Mammary epithelial cell (primary cell): ENCODE measurements at regions of chr2 and their contacts with region 1.

Region 1: GRCh38 chr2:25207078-25207545 is 38.7 kb upstream of the POMC start:
- DNase-seq: no peak
- H3K4me3 ChIP-seq: no peak overlapping the region
- H3K27ac ChIP-seq: no peak overlapping the region
- H3K4me1 ChIP-seq: no peaks in the 10 kb centered on the region
- H3K27me3 ChIP-seq: peaks cover 2% of the 10 kb centered on the region
- CTCF ChIP-seq: no peak

Region 2: DNA sequence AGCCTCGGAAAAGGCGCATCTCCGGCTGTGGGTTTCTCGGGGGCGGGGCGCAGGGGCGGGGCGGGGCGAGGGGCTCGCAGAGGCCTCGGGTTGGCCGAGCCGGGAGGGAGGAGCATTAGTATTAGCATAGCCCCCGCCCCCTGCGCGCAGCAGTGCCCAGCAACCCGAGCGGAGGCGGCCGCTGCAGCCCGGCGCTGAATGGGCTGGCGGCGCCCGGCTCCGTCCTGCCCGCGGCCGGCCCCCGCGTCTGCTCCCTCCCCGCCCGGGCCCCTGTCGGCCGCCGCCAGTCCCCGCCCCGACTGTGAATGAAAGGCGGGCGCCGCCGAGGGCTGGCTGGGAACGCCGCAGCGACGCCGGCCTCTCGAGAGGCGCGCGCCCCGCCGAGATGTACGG is 165.2 kb before region 1 on chr2 and contains the start of gene EFR3B:
- CTCF ChIA-PET with region 1: no interaction called
- dilution Hi-C with region 1: no loop called
- in situ Hi-C with region 1: no loop called
- intact Hi-C with region 1: no loop called
- DNase-seq: peak; percentile 89
- H3K4me3 ChIP-seq: peak within 1 kb of the TSS; percentile 37 to 59 (median 53)
- H3K27ac ChIP-seq: no peak within 1 kb of the TSS
- H3K4me1 ChIP-seq: peaks cover 12% of the 10 kb centered on the region
- H3K27me3 ChIP-seq: peaks cover 18% of the 10 kb centered on the region
- CTCF ChIP-seq: no peak
- total RNA-seq, gene EFR3B: under 0.01 to 0.05 TPM

Region 3: DNA sequence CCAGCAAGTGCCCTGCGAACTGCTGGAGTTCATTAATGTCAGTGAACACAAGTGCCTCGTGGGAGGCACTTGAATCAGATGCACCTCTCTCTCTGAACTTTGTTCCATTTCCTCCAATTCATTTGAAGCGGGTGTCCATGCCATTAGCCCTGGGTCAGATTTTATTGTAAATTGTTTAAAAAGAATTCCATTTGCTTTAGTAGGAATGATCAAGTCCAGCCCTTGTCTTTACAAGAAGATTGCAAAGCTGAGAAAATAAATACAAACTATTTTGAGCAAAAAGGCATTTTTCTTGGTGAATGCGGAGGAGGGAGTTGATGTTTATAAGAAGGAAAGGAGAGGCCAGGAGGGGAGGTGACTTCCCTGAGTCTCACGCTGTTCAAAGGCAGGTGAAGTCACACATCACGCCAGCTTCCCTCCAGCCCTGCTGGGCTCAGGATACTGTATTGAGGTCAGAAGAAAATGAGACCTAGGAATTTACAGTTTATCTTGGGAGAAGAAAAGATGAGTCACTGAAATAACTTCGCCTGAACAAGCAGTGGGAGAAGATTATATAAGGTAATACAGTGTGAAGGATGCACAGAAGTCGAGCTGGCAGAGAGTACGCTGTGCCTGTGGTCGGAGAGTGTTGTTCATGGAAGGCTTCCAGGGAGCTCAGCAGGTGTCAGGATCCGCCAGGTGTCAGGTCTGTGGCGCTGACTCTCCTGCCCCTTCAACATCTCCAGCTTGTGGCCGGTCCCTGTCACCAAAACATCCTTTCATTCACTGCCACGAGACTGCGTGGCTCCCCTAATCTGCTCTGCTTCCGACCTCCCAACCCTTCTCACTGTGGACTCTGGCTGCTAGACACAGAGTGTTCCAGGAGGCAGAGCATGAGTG is 128.7 kb before region 1 on chr2:
- CTCF ChIA-PET with region 1: no interaction called
- dilution Hi-C with region 1: loop called (anchors 5 kb)
- in situ Hi-C with region 1: no loop called
- intact Hi-C with region 1: no loop called
- DNase-seq: peak; percentile 90
- H3K4me3 ChIP-seq: no peak overlapping the region
- H3K27ac ChIP-seq: no peak overlapping the region
- H3K4me1 ChIP-seq: no peaks in the 10 kb centered on the region
- H3K27me3 ChIP-seq: peaks cover 49% of the 10 kb centered on the region
- CTCF ChIP-seq: peak in 1 of 2 donors; percentile 16

Region 4: DNA sequence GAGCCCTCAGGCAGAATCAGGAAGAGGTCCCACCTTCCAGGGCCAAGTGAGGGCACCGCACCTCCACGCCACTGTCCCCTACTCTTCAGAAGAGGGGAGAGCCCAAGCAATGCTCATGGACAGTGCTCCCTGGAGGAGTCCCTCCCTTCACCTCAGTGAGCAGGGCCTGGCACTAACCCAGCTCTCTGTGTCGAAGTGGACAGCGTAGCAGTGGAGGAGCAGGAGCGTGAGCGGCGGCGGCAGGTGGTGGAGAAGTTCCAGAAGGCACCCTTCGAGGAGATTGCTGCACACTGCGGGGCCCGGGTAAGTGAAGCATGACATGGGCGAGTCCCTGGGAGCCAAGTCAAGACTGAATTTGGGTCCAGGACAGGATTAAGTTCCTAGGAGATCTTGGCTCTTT is 55.4 kb before region 1 on chr2:
- CTCF ChIA-PET with region 1: no interaction called
- dilution Hi-C with region 1: loop called (anchors 5 kb)
- in situ Hi-C with region 1: no loop called
- intact Hi-C with region 1: no loop called
- DNase-seq: no peak
- H3K4me3 ChIP-seq: no peak overlapping the region
- H3K27ac ChIP-seq: no peak overlapping the region
- H3K4me1 ChIP-seq: no peaks in the 10 kb centered on the region
- H3K27me3 ChIP-seq: peaks cover 1% of the 10 kb centered on the region
- CTCF ChIP-seq: no peak

Region 5: GRCh38 chr2:25252281-25253105 is 45.4 kb after region 1 on chr2:
- CTCF ChIA-PET with region 1: no interaction called
- dilution Hi-C with region 1: loop called (anchors 5 kb)
- in situ Hi-C with region 1: no loop called
- intact Hi-C with region 1: no loop called
- DNase-seq: no peak
- H3K4me3 ChIP-seq: no peak overlapping the region
- H3K27ac ChIP-seq: no peak overlapping the region
- H3K4me1 ChIP-seq: peaks cover 14% of the 10 kb centered on the region
- H3K27me3 ChIP-seq: no peaks in the 10 kb centered on the region
- CTCF ChIP-seq: no peak

Region 6: GRCh38 chr2:25529034-25529433 is 321.9 kb after region 1 on chr2:
- CTCF ChIA-PET with region 1: no interaction called
- dilution Hi-C with region 1: no loop called
- in situ Hi-C with region 1: no loop called
- intact Hi-C with region 1: no loop called
- DNase-seq: no peak
- H3K4me3 ChIP-seq: no peak overlapping the region
- H3K27ac ChIP-seq: peak overlapping the region; percentile 1
- H3K4me1 ChIP-seq: peaks cover 13% of the 10 kb centered on the region
- H3K27me3 ChIP-seq: no peaks in the 10 kb centered on the region
- CTCF ChIP-seq: no peak